Heart left ventricle (tissue), 16 donors: ENCODE measurements at regions of chr2 and their contacts with region 1.

Region 1: DNA sequence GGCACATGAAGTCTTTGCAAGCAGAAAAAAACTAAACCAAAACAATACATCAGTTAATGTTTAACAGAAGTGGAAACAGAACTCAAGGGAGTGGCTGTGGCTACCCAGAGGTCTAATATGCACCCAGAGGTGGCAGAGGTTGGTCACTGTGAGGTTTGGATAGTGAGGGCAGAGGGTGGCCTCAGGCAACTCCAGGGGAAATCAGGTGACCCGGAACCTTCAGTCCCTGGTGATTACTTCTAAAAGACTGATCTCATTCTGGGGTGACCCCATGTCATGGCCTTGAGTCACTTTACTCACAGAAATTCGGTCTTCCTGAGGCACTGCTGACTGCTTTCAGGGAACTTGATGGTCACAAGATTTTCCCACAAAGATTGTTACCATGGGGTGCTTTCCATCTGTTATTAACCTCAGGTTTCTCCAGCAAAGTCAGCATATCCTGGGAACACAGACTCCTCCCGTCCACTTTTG is 99.4 kb downstream of the TMEM17 start:
- DNase-seq: no peak
- ATAC-seq: no peak
- H3K4me3 ChIP-seq: no peak overlapping the region
- H3K27ac ChIP-seq: no peak overlapping the region
- H3K4me1 ChIP-seq: peaks cover 5 to 45% (median 30%) of the 10 kb centered on the region in 12 donors
- H3K27me3 ChIP-seq: no peaks in the 10 kb centered on the region
- CTCF ChIP-seq: no peak
- POLR2A ChIP-seq: no peak

Region 2: GRCh38 chr2:61090386-61090921 is 1316.2 kb before region 1 on chr2:
- intact Hi-C with region 1: no loop called
- DNase-seq: no peak
- ATAC-seq: no peak
- H3K4me3 ChIP-seq: no peak overlapping the region
- H3K27ac ChIP-seq: no peak overlapping the region
- H3K4me1 ChIP-seq: no peaks in the 10 kb centered on the region
- H3K27me3 ChIP-seq: no peaks in the 10 kb centered on the region
- CTCF ChIP-seq: no peak
- POLR2A ChIP-seq: no peak

Region 3: GRCh38 chr2:61993444-61994024 is 413.1 kb before region 1 on chr2:
- intact Hi-C with region 1: loop called in 7 of 10 experiments (anchors 1 to 5 kb)
- DNase-seq: peak in 1 of 5 donors; percentile 19
- ATAC-seq: peak in 3 of 4 donors; percentile 67 to 83 (median 75)
- H3K4me3 ChIP-seq: no peak overlapping the region
- H3K27ac ChIP-seq: no peak overlapping the region
- H3K4me1 ChIP-seq: peaks cover 0 to 25% (median 3%) of the 10 kb centered on the region in 12 donors
- H3K27me3 ChIP-seq: no peaks in the 10 kb centered on the region
- CTCF ChIP-seq: peak; percentile 55 to 86 (median 69)
- POLR2A ChIP-seq: no peak

Region 4: DNA sequence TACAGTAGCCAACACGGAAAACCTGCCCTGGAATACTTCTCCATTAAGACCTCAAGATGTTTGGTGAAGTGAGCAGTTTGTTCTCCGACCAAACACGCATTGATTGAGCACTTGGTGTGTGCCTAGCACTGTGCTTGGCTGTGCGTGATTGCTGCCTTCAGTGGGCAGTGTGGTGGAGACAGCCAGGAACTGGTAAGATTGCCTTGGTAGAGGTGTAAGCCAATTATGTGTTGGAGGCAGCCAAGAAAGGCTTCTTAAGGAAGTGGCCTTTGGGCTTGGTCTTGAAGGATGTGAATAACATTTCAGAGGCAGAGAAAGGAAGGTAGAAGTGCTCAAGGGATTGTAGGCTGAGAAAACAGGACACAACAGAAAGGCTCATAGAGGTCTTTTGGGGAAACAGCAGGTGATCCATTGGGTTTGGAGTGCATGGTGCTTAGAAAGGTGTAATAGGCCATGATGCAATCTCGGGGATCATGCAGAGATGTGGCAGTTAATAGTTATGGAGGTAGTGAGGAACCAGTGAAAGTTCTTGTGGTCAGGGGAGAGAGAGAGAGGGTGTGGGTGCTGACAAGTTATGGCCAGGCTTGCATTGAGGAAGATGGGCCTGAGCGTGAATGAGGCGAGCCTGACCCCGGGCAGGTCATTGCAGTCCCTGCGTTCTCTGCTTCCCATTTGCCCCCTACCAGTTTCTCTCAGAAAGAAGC is 204.4 kb before region 1 on chr2:
- intact Hi-C with region 1: loop called (anchors 2 to 10 kb)
- DNase-seq: no peak
- ATAC-seq: peak in 1 of 4 donors; percentile 33
- H3K4me3 ChIP-seq: no peak overlapping the region
- H3K27ac ChIP-seq: peak overlapping the region in 4 of 12 donors; percentile 16 to 37 (median 24)
- H3K4me1 ChIP-seq: peaks cover 0 to 93% (median 66%) of the 10 kb centered on the region in 12 donors
- H3K27me3 ChIP-seq: no peaks in the 10 kb centered on the region
- CTCF ChIP-seq: no peak
- POLR2A ChIP-seq: no peak

Region 5: GRCh38 chr2:62306751-62307468 is 99.7 kb before region 1 on chr2:
- intact Hi-C with region 1: loop called in 1 of 10 experiments (anchors 10 kb)
- DNase-seq: no peak
- ATAC-seq: peak in 1 of 4 donors; percentile 29
- H3K4me3 ChIP-seq: no peak overlapping the region
- H3K27ac ChIP-seq: peak overlapping the region in 7 of 12 donors; percentile 4 to 61 (median 22)
- H3K4me1 ChIP-seq: peaks cover 6 to 82% (median 47%) of the 10 kb centered on the region in 12 donors
- H3K27me3 ChIP-seq: no peaks in the 10 kb centered on the region
- CTCF ChIP-seq: no peak
- POLR2A ChIP-seq: no peak

Region 6: DNA sequence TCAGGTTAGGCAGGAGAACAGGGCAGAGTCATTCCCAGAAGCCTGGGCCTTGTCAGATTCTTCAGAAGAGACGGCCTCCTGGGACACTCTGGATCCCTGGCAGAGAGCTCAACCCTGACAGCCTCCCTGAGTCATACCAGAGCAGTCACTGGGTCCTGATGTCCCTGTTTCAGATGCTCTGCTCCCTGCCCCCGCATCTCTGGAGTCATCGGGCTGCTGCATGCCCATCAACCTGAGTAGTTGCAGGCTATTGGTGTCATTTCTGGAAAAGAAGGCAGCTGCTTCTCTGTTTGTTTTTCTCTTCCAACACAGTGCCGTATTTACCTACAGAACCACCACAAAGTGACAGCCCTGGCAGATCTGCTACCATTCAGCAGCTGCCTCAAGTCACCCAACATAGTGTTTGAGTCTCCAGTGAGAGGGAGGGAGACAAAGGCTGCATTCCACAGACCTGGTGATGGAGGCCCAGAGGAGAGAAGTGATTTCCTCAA is 65.6 kb before region 1 on chr2:
- intact Hi-C with region 1: loop called in 1 of 10 experiments (anchors 5 kb)
- DNase-seq: peak; percentile 33 to 87 (median 60)
- ATAC-seq: peak; percentile 87 to 99 (median 94)
- H3K4me3 ChIP-seq: no peak overlapping the region
- H3K27ac ChIP-seq: peak overlapping the region in 8 of 12 donors; percentile 20 to 67 (median 42)
- H3K4me1 ChIP-seq: peaks cover 0 to 27% (median 8%) of the 10 kb centered on the region in 12 donors
- H3K27me3 ChIP-seq: no peaks in the 10 kb centered on the region
- CTCF ChIP-seq: no peak
- POLR2A ChIP-seq: no peak